AG04450 (cell line): ENCODE measurements at regions of chr7 and their contacts with region 1.

Region 1: DNA sequence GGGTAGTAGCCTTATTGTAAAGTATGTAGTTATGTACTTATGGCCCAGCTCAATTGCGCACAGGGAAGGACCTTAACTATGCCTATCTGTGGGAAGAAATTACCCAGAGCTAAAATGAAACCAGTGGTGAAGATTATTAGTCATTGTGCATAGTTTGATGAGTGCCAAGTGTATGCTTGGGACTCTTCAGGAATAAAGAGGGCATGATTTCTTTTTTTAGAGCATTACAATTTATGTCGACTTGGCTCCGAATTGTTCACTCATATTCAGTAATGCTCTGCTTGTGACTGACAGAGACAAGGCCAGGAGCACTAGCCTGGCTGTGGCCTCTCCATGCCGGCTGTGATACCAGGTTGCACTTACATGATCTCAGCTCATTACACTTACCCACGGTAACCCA is 269.5 kb downstream of the TRIL start:
- DNase-seq: no peak
- H3K4me3 ChIP-seq: no peak overlapping the region
- H3K27ac ChIP-seq: no peak overlapping the region
- H3K27me3 ChIP-seq: no peaks in the 10 kb centered on the region
- CTCF ChIP-seq: no peak

Region 2: DNA sequence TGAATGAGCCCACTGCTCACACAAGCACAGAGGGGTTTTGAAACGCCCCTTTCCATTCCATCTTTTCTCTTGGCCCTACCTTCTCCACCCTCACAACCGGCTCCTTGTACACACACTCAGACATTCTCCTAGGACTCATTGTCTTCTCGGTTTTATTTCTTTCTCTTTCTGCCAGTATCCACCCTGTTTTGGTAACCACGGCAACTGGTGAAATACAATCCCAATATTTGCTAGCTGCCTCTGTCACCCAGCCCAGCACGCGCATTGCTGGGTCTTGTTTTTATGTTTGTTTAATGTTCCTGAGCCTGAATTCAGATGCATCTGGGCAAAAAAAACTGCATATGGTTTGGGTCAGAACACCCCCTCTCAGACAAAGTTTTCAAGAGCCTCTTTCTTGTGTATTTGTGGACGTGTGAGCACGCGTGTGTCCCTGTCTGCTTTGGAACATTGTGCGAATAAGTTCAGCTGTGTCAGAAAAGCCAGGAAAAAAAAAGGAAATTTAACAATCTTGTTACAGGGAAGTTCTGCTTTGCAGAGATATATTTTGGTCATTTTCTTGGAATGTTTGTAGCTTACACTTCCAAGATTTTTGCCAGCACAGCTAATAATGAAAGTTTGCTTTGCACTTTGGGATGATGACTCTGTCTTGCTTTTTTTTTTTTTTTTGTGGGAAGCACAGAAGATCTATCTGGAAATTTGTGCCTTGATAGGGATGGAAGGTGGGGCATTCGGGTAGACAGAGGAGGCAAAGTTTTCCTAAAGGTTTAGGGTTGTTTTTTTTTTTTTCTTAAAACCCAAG is 43.6 kb after region 1 on chr7:
- CTCF ChIA-PET with region 1: interaction called, 11 read pairs
- POLR2A ChIA-PET with region 1: no interaction called
- DNase-seq: peak; percentile 21
- H3K4me3 ChIP-seq: no peak overlapping the region
- H3K27ac ChIP-seq: no peak overlapping the region
- H3K27me3 ChIP-seq: no peaks in the 10 kb centered on the region
- CTCF ChIP-seq: no peak